ENCODE measurements at regions of chr16 and their contacts with region 1.

Region 1: GRCh38 chr16:74862741-74863244 is 88.2 kb upstream of the FA2H start:
- DNase-seq: peak; percentile 58

Region 2: DNA sequence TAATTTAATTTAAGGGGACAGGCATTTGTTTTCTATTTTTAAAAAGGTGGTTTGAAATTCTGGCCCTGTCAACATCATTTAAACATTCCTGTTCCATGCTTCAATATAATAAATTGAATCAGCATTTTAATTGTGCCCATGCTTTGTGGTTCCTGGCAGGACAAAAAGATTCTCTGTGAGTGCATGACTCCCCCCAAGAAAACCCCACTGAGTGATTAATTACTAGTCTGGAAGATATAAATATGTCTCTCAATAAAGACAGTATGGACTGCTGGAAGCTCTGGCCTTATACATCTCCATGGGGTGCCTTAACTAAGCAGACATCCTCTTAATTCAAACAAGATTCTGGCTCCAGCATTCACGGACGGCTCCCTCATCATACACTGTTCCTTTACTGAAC is 661.2 kb before region 1 on chr16:
- CTCF ChIA-PET with region 1: no interaction called
- POLR2A ChIA-PET with region 1: no interaction called
- DNase-seq: no peak

Region 3: DNA sequence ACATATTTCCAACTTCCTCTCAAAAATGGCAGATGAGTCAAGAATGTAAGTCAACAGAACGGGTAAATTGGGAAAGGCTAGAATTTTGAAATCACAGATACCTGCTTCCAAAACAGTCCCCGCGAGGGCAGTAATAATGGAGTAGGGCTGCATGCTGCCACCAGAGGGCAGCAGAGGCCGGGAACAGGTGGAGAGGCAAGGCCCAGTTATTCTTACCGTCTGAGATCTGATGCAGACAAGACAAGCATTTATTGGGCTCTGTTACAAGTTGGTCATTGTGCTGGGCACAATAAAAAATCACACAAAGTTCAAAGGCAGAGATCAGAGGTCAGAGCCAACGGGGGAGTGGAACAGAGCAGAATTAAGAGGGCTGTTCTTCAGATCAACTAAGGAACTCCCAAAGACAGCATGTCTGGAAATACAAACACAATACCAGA is 153.3 kb before region 1 on chr16:
- CTCF ChIA-PET with region 1: interaction called, 30 read pairs
- POLR2A ChIA-PET with region 1: no interaction called
- DNase-seq: peak; percentile 82

Region 4: GRCh38 chr16:74813109-74813641 is 49.6 kb before region 1 on chr16:
- CTCF ChIA-PET with region 1: interaction called, 14 read pairs
- POLR2A ChIA-PET with region 1: interaction called, 4 read pairs
- DNase-seq: peak; percentile 90

Region 5: DNA sequence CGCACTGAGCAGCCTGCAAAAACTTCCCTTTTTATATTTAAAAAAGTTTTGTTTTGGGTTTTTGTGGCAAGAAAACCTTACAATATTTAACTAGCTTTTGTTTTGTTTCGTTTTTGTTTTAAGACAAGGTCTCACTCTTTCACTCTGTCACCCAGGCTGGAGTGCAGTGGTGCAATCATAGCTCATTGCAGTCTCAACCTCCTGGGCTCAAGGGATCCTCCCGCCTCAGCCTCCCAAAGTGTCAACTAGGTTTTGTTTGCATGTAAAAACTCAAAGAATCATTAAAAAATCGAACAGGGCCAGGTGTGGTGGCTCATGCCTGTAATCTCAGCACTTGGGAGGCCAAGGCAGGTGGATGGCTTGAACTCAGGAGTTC is 10.3 kb before region 1 on chr16:
- CTCF ChIA-PET with region 1: interaction called, 16 read pairs
- POLR2A ChIA-PET with region 1: no interaction called
- DNase-seq: no peak

Region 6: DNA sequence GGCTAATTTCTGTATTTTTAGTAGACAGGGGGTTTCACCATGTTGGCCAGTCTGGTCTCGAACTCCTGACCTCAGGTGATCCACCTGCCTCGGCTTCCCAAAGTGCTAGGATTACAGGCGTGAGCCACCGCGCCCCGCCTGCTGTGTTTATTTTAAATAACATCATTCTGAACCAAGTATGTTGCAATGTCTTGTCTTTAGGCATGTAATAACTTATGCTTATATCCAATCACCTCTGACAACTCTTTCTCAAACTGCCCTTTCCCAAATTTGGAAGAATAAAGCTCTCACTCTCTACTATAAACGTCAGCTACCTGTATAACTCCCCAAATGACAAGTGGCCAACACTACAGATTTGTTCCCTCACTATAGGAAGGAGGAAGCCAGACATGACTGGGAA is 14.9 kb after region 1 on chr16:
- CTCF ChIA-PET with region 1: no interaction called
- POLR2A ChIA-PET with region 1: no interaction called
- DNase-seq: no peak

Region 7: DNA sequence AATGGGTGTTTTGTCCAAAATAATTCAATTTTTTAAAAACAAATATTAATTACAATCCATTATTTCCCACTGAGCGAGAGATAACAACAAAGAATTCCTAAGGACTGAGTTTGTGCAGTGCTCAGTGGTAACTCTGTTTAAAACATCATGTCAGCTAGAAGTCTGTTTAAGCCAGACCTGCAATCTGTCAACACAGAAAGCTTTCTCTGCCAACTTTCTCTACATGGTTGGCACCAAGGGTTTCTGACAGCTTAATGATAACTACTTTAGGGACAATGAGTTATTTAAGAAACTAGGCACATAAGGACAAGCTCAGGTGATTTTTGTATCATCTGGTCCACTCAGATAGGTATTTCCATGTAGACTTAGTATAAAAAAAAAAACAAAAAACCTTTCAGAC is 40.3 kb after region 1 on chr16:
- CTCF ChIA-PET with region 1: no interaction called
- POLR2A ChIA-PET with region 1: no interaction called
- DNase-seq: no peak